BJ (cell line): ENCODE measurements at regions of chr14 and their contacts with region 1.

Region 1: DNA sequence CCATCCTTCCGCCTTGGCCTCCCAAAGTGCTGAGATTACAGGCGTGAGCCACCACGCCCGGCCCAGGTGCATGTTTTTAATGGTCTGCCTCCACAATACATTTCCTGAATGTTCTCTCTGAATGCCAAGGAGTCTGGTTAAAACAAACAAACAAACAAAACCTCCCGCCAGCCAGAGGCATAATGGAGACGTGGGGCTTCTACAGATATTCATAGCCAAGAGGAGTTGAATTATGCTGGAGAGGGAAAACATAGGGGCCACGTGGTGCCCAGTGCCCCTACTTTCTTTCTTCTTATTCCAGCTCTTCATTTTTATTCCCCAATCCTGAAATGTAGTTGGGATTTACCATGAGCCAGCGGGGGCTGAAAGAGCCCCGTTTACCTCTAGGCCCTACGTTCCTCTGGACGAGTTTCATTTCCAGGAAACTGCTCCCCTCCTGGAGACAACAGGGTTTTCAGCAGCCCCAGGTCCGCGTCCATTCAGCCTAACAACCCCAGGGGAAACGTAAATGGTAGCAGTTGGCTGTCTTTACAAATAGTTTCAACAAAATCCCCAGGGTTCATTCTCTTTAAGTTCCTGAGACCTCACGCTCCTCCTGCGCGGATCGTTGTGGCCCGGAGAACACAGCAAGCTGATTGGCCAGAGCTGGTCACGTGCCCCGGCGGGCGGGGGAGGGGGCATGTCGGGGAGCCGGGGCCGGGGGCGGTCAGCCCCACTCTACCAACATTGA is 108.5 kb upstream of the ESRRB start:
- DNase-seq: no peak
- H3K4me3 ChIP-seq: peak overlapping the region; percentile 45
- H3K27me3 ChIP-seq: no peaks in the 10 kb centered on the region
- CTCF ChIP-seq: peak; percentile 44

Region 2: GRCh38 chr14:76257111-76257803 is 10.2 kb before region 1 on chr14:
- CTCF ChIA-PET with region 1: interaction called, 10 read pairs
- POLR2A ChIA-PET with region 1: interaction called, 3 read pairs
- DNase-seq: no peak
- H3K4me3 ChIP-seq: no peak overlapping the region
- H3K27me3 ChIP-seq: no peaks in the 10 kb centered on the region
- CTCF ChIP-seq: no peak

Region 3: GRCh38 chr14:76876076-76876475 is 608.6 kb after region 1 on chr14:
- CTCF ChIA-PET with region 1: no interaction called
- POLR2A ChIA-PET with region 1: no interaction called
- DNase-seq: no peak
- H3K4me3 ChIP-seq: no peak overlapping the region
- H3K27me3 ChIP-seq: peaks cover 1% of the 10 kb centered on the region; the same call in 1 of the 2 replicates
- CTCF ChIP-seq: peak; percentile 93